MCF 10A (cell line): ENCODE measurements at regions of chr7 and their contacts with region 1.

Region 1: DNA sequence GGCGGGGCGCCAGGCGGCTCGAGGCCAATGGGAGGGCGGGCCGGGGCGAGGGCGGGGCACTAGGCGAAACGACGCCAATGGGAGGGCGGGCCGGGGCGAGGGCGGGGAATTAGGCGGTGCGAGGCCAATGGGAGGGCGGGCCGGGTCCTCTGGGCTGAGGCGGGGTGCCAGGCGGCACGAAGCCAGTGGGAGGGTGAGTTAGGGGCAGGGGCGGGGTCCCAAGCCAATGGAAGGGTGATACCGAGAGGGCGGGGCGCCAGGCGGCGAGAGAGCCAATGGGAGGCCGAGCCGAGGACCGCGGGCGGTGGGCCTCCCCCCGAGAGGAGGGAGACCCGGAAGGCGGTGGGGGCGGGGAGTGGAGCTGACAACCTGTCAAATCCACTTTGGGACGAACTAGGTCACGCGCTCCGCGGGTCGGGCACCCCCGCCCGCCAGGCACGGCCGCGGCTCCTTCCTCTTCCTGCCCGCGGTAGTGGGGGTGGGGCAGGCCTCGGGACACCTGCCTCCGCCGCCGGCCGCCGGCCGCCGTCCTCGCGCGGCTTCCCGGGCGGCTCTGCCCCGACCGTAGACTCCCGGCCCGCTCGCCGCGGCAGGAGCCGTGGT is 28.0 kb upstream of the KMT2C start:
- DNase-seq: peak; percentile 99
- H3K4me3 Mint-ChIP-seq: peak overlapping the region; percentile 84
- H3K27ac Mint-ChIP-seq: peak overlapping the region; percentile 77
- H3K4me1 Mint-ChIP-seq: peaks cover 5% of the 10 kb centered on the region
- H3K27me3 Mint-ChIP-seq: no peaks in the 10 kb centered on the region
- CTCF ChIP-seq: no peak

Region 2: GRCh38 chr7:152313831-152314604 is 149.8 kb before region 1 on chr7:
- CTCF ChIA-PET with region 1: no interaction called
- POLR2A ChIA-PET with region 1: interaction called, 12 read pairs
- intact Hi-C with region 1: no loop called
- DNase-seq: peak; percentile 96
- H3K4me3 Mint-ChIP-seq: peak overlapping the region; percentile 37
- H3K27ac Mint-ChIP-seq: peak overlapping the region; percentile 49
- H3K4me1 Mint-ChIP-seq: peaks cover 30% of the 10 kb centered on the region
- H3K27me3 Mint-ChIP-seq: no peaks in the 10 kb centered on the region
- CTCF ChIP-seq: no peak

Region 3: DNA sequence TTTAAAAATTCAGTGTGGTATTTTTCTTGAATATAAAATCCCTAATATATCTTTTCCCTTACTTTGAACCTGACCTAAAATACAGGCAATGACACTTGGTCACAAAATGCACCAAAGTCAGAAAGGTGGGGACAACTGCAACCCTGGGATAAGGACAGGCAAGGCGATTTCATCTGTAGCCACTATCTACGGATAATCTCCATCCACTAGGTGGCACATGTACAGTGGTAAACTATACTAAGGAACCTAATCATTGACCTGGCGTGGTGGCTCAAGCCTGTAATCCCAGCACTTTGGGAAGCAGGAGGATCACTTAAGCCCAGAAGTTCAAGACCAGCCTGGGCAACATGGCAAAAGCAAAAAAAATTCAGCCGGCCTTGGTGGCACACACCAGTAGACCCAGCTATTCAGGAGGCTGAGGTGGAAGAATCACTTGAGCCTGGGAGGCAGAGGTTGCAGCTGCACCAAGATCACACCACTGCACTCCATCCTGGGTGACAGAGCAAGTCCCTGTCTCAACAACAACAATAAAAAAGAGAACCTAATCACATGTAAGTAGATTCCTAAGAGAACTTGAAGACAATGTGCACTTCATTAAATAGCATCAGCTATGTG is 126.9 kb before region 1 on chr7:
- CTCF ChIA-PET with region 1: no interaction called
- POLR2A ChIA-PET with region 1: interaction called, 3 read pairs
- intact Hi-C with region 1: loop called (anchors 10 kb)
- DNase-seq: peak; percentile 58
- H3K4me3 Mint-ChIP-seq: no peak overlapping the region
- H3K27ac Mint-ChIP-seq: no peak overlapping the region
- H3K4me1 Mint-ChIP-seq: peaks cover 10% of the 10 kb centered on the region
- H3K27me3 Mint-ChIP-seq: no peaks in the 10 kb centered on the region
- CTCF ChIP-seq: peak; percentile 49

Region 4: DNA sequence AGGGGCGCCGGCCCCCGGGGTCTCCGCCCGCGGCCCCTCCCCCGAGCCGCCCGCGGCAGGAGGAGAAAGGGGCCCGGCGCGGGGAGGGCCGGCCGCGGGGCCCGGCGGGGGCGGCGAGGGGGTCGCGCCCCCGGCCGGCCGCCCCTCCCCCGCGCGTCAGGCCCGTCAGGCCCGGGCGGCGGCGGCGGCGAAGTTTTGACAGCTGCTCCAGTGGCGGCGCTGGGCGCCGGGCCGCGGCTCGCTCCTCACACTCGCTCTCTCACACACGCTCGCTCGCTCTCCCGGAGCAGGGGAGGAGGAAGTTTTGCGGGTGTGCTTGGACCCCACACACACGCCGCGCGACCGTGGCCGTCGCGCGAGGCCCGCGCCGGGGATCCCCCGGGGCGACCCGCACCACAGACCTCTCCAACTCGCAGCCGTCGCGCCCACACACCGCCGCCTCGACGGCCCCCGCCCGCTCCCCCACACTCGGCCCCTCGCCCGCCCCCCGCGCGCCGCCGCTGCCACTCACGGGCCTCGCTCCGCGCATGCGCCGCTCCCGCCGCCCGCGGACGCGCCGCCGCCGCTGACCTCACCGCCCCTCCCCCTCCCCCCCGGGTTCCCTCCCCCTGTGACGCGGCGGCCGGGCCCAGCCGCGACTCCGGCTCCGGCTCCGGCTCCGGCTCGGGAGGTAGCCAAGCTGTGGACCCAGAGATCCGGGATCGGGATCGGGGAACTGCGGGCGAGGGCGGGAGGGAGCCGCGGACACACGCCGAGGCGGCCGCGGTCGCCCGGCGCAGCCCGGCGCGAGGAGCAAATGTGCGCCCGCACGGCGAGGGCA is 27.5 kb before region 1 on chr7:
- CTCF ChIA-PET with region 1: interaction called, 7 read pairs
- POLR2A ChIA-PET with region 1: interaction called, 39 read pairs
- intact Hi-C with region 1: no loop called
- DNase-seq: peak; percentile 90
- H3K4me3 Mint-ChIP-seq: peak overlapping the region; percentile 88
- H3K27ac Mint-ChIP-seq: peak overlapping the region; percentile 66
- H3K4me1 Mint-ChIP-seq: peaks cover 16% of the 10 kb centered on the region
- H3K27me3 Mint-ChIP-seq: no peaks in the 10 kb centered on the region
- CTCF ChIP-seq: no peak

Region 5: GRCh38 chr7:152588350-152588749 is 124.5 kb after region 1 on chr7:
- CTCF ChIA-PET with region 1: no interaction called
- POLR2A ChIA-PET with region 1: no interaction called
- intact Hi-C with region 1: loop called (anchors 10 kb)
- DNase-seq: peak; percentile 59
- H3K4me3 Mint-ChIP-seq: no peak overlapping the region
- H3K27ac Mint-ChIP-seq: peak overlapping the region; percentile 90
- H3K4me1 Mint-ChIP-seq: peaks cover 6% of the 10 kb centered on the region
- H3K27me3 Mint-ChIP-seq: no peaks in the 10 kb centered on the region
- CTCF ChIP-seq: no peak

Region 6: GRCh38 chr7:152675759-152676636 is 212.2 kb after region 1 on chr7 and contains the start of gene XRCC2:
- CTCF ChIA-PET with region 1: no interaction called
- POLR2A ChIA-PET with region 1: interaction called, 5 read pairs
- intact Hi-C with region 1: loop called (anchors 10 kb)
- DNase-seq: peak; percentile 94
- H3K4me3 Mint-ChIP-seq: peak within 1 kb of the TSS; percentile 81
- H3K27ac Mint-ChIP-seq: peak within 1 kb of the TSS; percentile 74
- H3K4me1 Mint-ChIP-seq: peaks cover 7% of the 10 kb centered on the region
- H3K27me3 Mint-ChIP-seq: no peaks in the 10 kb centered on the region
- CTCF ChIP-seq: no peak
- total RNA-seq, gene XRCC2: 4.1 and 5.2 TPM in 2 replicates

Region 7: DNA sequence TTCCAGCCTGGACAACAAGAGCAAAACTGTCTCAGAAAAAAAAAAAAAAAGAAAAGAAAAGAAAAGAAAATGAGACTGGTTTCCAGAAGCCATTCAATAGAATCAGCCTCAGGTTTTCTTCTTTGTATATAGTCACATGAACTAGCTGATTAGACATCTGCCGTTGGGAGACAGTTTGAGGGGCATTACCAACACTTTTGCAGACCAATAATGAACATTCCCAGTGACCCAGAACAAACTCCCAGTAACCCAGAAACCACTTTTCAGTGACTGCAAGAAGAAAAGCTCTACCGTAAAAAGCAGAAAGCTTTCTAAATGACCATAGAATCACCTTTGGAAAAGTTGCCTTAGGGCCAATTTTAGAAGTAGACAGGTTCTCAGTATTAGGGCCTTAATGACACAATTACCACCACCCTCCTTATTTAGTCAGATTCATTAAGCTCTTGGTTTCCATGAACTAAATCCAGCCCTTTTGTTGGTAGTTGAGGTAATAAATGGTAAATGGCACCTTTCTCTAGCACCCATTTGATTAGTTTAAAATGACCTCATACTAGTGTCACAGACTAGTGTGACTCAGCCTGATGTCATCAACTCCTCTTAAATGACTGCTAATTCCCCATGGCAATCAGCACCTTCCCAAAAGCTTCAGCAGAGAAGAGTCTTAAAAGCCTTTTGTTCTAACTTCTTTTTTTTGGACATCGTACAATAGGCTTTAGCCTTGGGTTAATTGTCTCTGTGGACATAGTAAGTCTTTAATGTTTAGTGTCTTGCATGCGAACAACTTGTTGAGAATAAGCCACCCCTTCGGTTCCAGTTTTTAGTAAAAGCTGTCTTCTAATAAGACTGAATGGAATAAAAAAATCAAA is 245.7 kb after region 1 on chr7:
- CTCF ChIA-PET with region 1: no interaction called
- POLR2A ChIA-PET with region 1: no interaction called
- intact Hi-C with region 1: loop called (anchors 10 kb)
- DNase-seq: peak; percentile 41
- H3K4me3 Mint-ChIP-seq: no peak overlapping the region
- H3K27ac Mint-ChIP-seq: no peak overlapping the region
- H3K4me1 Mint-ChIP-seq: no peaks in the 10 kb centered on the region
- H3K27me3 Mint-ChIP-seq: no peaks in the 10 kb centered on the region
- CTCF ChIP-seq: no peak

Region 8: DNA sequence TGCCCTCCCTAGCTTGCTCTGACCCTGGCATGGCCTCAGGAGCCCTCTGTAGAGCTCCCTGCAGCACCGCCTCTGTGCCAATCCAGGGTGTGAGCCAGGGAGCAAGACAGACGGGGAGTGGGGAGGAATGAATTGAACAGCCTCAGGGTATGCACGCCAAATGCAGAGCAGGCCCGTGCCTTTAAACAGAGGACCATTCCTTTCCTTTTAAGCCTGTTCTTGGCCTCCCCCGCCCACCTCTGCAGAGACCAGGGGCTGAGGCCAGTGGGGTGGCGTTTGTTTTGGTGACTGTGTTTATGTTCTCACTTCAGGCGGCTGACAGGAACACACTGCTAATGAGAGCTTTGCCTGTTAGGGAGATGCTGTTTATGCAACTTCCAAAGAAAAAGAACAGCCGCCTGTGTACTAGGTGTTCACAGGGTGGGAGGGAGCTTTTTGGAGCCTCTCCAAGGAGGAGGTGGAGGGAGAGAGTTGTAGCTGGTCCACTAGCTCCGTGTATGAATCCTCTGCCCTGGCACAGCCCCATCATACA is 1060.3 kb after region 1 on chr7:
- CTCF ChIA-PET with region 1: no interaction called
- POLR2A ChIA-PET with region 1: no interaction called
- intact Hi-C with region 1: no loop called
- DNase-seq: no peak
- H3K4me3 Mint-ChIP-seq: no peak overlapping the region
- H3K27ac Mint-ChIP-seq: no peak overlapping the region
- H3K4me1 Mint-ChIP-seq: peaks cover 29% of the 10 kb centered on the region
- H3K27me3 Mint-ChIP-seq: no peaks in the 10 kb centered on the region
- CTCF ChIP-seq: no peak